Common myeloid progenitor, CD34-positive (primary cell): ENCODE measurements at regions of chr1 and their contacts with region 1.

Region 1: GRCh38 chr1:206766251-206766856 is 4.2 kb upstream of the IL19 start:
- DNase-seq: peak; percentile 67 to 85 (median 82)
- H3K4me3 ChIP-seq: peak overlapping the region in 3 of 7 experiments; percentile 36 to 52 (median 39)
- H3K27ac ChIP-seq: no peak overlapping the region
- H3K4me1 ChIP-seq: peaks cover 7 to 62% (median 39%) of the 10 kb centered on the region in 4 experiments
- H3K27me3 ChIP-seq: no peaks in the 10 kb centered on the region

Region 2: DNA sequence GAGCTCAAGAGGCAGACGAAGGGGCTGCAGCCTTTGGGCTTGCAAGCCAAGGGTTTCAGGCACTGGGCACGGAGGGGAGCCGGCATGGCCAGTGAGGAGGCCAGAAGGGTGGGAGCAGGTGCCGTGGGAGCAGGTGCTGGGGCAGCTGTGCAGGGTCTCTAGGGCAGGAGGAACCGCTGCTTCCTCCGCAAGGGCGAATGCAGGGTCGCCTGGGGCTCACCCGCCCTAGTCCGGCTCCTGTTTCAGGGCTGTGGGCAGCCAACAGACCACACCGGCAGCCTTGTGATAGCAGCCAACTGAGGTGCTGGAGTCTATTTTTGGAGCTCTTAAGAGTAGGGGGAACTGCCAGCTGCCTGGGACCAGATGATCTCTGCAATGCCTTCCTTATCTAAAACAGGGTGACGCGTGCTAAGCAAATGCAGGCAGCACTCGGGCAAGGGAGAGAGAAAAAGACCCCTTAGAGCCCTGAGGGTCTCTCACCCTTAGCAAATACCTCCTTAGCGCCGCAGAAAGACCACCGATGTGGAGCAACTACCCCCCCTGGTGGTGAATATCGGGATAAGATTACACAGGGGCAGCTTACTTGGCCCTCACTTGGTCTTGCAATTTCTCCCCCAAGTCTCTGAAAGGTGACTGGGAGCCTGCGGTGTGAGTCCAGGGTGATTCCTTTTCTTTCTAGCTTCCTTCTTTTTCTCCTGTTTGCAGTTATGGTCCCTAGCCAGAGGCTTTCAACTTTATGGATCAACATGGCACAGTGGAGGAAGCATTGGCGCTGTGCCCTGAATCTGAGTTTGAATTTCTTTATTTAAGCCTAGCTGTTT is 102.3 kb before region 1 on chr1:
- CTCF ChIA-PET with region 1: no interaction called
- POLR2A ChIA-PET with region 1: no interaction called
- DNase-seq: peak; percentile 81 to 93 (median 91)
- H3K4me3 ChIP-seq: peak overlapping the region in 6 of 7 experiments; percentile 13 to 69 (median 59)
- H3K27ac ChIP-seq: no peak overlapping the region
- H3K4me1 ChIP-seq: peaks cover 14 to 49% (median 40%) of the 10 kb centered on the region in 4 experiments
- H3K27me3 ChIP-seq: peaks cover 0 to 8% (median 0%) of the 10 kb centered on the region in 5 experiments

Region 3: GRCh38 chr1:206797534-206798383 is 31.4 kb after region 1 on chr1:
- CTCF ChIA-PET with region 1: interaction called, 20 read pairs
- POLR2A ChIA-PET with region 1: no interaction called
- DNase-seq: peak; percentile 42 to 72 (median 60)
- H3K4me3 ChIP-seq: no peak overlapping the region
- H3K27ac ChIP-seq: no peak overlapping the region
- H3K4me1 ChIP-seq: peaks cover 0 to 13% (median under 1%) of the 10 kb centered on the region in 4 experiments
- H3K27me3 ChIP-seq: no peaks in the 10 kb centered on the region

Region 4: DNA sequence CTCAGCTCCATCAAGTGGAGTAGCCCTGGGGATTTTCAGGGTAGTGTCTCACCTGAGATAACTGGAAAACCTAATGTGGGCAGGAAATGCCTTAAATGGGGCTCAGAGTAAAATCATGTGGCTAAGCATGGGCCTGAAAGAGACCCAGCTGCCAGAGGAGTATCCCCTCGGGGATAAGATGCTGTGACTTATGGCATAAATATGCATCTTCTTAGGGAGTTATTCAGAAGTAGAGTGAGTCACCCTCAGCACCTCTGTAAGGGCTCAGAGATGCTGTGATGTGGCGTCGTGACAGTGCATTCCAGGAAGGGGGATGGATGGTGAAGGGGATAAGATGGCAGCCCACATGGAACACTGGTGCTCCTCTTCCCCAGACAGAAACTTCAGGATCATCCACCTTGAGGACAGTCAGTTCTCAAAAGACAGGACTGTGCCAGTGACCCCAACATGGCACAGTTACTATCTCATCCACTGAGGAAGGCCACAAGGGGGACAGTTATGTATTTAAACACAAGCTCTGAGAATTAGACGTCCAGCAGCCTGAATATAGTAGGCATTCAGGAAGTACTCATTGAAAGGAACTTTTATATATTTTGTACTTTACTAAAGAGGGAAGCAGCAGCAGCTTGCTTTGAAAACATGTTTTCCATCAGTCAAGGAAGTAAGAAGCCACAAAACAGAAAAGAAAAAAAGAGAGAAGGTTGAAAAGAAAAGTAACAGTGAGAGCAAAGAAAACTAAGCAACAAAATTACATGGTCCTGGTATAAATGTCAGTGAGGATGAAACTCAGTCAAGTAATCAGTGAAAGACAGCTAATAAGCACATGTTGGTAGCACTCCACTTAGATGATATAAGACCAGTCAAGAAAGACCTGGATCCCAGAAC is 139.2 kb after region 1 on chr1:
- CTCF ChIA-PET with region 1: no interaction called
- POLR2A ChIA-PET with region 1: no interaction called
- DNase-seq: peak in 2 of 3 donors; percentile 39 to 46
- H3K4me3 ChIP-seq: peak overlapping the region in 1 of 7 experiments; percentile 24
- H3K27ac ChIP-seq: no peak overlapping the region
- H3K4me1 ChIP-seq: peaks cover 4 to 29% (median 24%) of the 10 kb centered on the region in 4 experiments
- H3K27me3 ChIP-seq: peaks cover 0 to 9% (median 0%) of the 10 kb centered on the region in 5 experiments